Esophagus muscularis mucosa (tissue), 4 donors: ENCODE measurements at regions of chr11 and their contacts with region 1.

Region 1: DNA sequence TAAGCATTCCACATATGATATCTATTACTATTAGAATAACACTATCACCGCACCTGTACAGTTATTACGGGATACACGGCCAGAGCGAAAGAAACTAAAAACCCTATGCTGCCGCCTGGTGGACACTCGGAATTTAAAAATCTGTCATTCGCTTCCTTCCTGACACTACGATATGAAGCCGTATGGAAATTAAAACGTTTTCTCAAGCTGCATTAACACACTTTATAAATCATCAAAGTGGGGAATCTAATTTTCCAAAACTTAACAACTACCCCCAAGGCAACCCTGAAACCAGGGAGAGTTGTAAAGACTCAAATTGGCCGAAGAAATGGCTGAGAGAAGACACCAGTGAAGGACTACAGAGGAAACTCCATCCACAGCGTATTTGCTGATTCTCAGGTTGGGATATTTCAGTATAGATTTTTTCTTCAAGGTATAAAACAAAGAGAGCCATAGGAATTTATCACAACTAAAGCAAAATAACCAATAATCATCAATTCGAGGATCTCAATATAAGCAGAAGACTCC is 1.4 kb downstream of the CCDC73 start:
- DNase-seq: no peak
- H3K4me3 ChIP-seq: peak overlapping the region; percentile 3 to 38 (median 26)
- H3K27ac ChIP-seq: no peak overlapping the region
- H3K4me1 ChIP-seq: peaks cover 0 to 8% (median 5%) of the 10 kb centered on the region in 4 donors
- H3K27me3 ChIP-seq: peaks cover 0 to 4% (median 0%) of the 10 kb centered on the region in 4 donors
- CTCF ChIP-seq: peak; percentile 57 to 66 (median 60)
- EP300 ChIP-seq: no peak
- POLR2A ChIP-seq: no peak

Region 2: DNA sequence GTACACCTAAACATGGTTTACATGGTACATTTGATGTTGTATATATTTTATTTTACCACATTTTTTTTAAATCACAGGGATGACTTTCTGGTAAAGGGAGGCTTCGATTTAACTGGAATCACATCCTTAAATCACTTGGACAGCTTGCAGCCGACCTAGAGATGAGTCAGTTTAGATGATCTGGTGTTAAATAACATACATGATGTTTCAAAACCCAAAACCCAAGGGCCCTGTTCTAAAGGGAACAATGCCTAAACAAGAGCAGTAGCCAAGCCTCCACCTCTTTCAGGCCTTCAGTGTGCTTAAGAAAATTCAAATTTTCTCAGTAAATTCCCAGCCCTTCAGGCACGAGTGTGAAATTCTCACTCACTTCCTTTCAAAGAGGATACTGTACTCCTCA is 466.5 kb before region 1 on chr11:
- intact Hi-C with region 1: loop called (anchors 5 kb)
- DNase-seq: no peak
- H3K4me3 ChIP-seq: no peak overlapping the region
- H3K27ac ChIP-seq: no peak overlapping the region
- H3K4me1 ChIP-seq: no peaks in the 10 kb centered on the region
- H3K27me3 ChIP-seq: peaks cover 0 to 14% (median 0%) of the 10 kb centered on the region in 4 donors
- CTCF ChIP-seq: no peak
- EP300 ChIP-seq: no peak
- POLR2A ChIP-seq: no peak